MCF 10A (cell line): ENCODE measurements at regions of chr3 and their contacts with region 1.

Region 1: DNA sequence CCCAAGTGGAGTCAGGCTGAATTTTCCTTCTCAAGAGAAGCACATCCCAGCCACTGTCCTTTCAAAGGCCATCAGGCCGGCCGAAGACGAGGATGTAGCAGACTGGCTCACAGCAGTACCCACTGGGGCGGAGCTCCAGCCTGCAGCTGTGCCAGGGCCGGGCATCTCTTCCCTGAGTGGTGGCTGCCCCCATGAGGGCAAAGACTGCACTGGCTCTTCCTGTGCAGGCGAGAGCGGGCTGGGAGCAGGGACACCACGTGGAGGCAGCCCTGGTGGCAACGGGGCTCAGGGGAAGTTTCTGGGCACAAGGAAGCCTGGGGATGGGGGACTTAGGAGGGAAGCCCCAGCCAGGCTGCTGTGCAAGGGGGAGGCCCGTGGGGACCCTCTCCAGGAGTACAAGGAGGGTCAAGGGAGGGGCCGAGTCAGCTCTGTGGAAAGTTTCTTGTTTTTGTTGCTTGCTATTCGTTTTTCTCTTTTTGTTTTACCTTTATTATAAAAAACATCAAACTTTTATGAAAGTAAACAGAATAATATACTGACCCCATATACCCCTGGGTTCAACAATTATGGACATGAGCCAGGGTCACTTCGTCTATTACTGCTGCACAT is 66.1 kb downstream of the RPN1 start:
- DNase-seq: peak; percentile 85
- H3K4me3 Mint-ChIP-seq: no peak overlapping the region
- H3K27ac Mint-ChIP-seq: no peak overlapping the region
- H3K4me1 Mint-ChIP-seq: no peaks in the 10 kb centered on the region
- H3K27me3 Mint-ChIP-seq: no peaks in the 10 kb centered on the region
- CTCF ChIP-seq: peak; percentile 87

Region 2: DNA sequence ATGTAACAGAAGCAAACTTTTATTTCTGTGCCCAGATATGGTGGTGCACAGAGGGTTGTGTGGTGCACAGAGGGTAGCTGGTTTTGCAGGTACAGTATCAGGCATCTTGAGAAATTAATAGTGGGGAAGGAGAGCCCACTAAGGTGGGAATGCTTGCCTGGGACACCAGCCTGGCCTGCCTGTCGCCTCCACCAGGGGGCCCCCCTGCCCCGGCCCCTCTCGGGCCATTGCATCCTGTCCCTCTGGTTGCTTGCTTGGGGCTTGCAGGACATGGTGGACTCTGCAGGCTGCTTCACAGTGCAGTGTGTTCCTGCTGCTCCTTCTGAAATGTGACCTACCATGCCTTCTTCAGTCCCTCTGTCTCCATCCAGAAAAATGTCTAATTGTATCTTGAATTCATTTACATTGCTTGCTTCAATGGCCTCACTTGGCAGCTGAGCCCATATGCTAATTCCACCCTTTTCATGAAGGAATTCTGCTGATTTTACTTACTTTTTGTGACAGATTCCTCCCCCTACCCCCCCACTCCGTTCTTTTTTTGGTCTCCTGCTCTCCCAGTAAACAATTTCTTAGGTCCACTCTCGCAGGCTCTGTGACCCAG is 357.6 kb before region 1 on chr3:
- CTCF ChIA-PET with region 1: interaction called, 3 read pairs
- POLR2A ChIA-PET with region 1: no interaction called
- intact Hi-C with region 1: loop called (anchors 1 kb)
- DNase-seq: peak; percentile 51
- H3K4me3 Mint-ChIP-seq: no peak overlapping the region
- H3K27ac Mint-ChIP-seq: no peak overlapping the region
- H3K4me1 Mint-ChIP-seq: no peaks in the 10 kb centered on the region
- H3K27me3 Mint-ChIP-seq: no peaks in the 10 kb centered on the region
- CTCF ChIP-seq: peak; percentile 55

Region 3: GRCh38 chr3:128322066-128323022 is 262.2 kb before region 1 on chr3:
- CTCF ChIA-PET with region 1: interaction called, 4 read pairs
- POLR2A ChIA-PET with region 1: no interaction called
- intact Hi-C with region 1: loop called (anchors 5 kb)
- DNase-seq: peak; percentile 48
- H3K4me3 Mint-ChIP-seq: no peak overlapping the region
- H3K27ac Mint-ChIP-seq: no peak overlapping the region
- H3K4me1 Mint-ChIP-seq: no peaks in the 10 kb centered on the region
- H3K27me3 Mint-ChIP-seq: no peaks in the 10 kb centered on the region
- CTCF ChIP-seq: peak; percentile 19

Region 4: DNA sequence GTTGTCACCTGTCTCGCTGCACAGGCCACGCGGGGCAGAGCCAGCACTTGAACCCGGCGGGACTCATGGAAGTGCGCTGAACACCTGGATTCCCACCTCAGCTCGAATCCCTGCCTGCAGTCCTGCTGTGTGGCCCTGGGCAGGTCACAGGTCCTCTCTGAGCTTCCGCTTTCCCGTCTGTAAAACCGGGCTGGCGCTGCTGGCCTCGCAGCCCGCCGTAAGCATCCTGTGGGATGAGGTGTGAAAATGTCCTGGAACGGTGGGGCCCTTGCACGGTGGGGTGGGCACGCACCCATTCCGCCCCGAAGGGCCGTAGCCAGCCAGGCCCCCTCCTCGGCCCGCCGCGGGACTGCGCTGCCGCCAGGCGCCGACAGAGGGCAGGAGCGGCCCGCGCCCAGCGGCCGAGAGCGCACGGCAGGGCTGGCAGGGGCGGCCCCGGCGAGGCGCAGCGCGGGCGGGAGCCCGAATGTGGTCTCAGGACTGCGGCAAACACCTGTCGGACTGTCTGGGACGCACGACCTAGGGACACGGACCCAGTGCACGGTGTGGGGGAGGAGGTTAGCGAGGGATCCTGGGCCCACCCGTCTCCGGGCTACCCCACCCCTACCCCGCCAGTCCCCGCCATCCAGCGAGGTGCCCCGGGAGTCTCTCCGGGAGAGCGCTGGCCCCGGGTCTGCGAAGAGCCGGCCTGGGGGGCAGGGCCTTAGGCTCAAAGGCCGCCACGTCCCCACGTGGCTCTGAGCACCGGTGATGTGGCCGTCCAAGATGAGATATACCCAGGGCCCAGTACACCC is 158.2 kb before region 1 on chr3:
- CTCF ChIA-PET with region 1: interaction called, 10 read pairs
- POLR2A ChIA-PET with region 1: no interaction called
- intact Hi-C with region 1: loop called (anchors 1 kb)
- DNase-seq: peak; percentile 30
- H3K4me3 Mint-ChIP-seq: no peak overlapping the region
- H3K27ac Mint-ChIP-seq: no peak overlapping the region
- H3K4me1 Mint-ChIP-seq: no peaks in the 10 kb centered on the region
- H3K27me3 Mint-ChIP-seq: peaks cover 35% of the 10 kb centered on the region
- CTCF ChIP-seq: peak; percentile 92

Region 5: DNA sequence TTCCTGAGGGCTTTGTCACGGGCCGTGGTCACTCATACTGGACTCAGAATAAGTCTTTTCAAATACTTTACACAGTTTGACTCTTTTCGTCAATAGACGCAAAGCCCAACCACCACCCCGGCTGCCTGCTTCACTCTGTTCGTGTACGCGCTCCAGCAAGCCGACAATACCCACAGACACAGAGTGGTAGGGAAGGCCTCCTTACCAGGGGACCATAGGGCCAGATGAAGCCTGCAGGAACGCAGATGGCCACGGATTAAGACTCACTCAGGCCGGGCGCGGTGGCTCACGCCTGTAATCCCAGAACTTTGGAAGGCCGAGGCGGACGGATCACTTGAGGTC is 814.3 kb after region 1 on chr3:
- CTCF ChIA-PET with region 1: no interaction called
- POLR2A ChIA-PET with region 1: no interaction called
- intact Hi-C with region 1: no loop called
- DNase-seq: peak; percentile 19
- H3K4me3 Mint-ChIP-seq: peak overlapping the region; percentile 88
- H3K27ac Mint-ChIP-seq: peak overlapping the region; percentile 97
- H3K4me1 Mint-ChIP-seq: peaks cover 30% of the 10 kb centered on the region
- H3K27me3 Mint-ChIP-seq: no peaks in the 10 kb centered on the region
- CTCF ChIP-seq: no peak